AG04449 (cell line): ENCODE measurements at regions of chr14 and their contacts with region 1.

Region 1: DNA sequence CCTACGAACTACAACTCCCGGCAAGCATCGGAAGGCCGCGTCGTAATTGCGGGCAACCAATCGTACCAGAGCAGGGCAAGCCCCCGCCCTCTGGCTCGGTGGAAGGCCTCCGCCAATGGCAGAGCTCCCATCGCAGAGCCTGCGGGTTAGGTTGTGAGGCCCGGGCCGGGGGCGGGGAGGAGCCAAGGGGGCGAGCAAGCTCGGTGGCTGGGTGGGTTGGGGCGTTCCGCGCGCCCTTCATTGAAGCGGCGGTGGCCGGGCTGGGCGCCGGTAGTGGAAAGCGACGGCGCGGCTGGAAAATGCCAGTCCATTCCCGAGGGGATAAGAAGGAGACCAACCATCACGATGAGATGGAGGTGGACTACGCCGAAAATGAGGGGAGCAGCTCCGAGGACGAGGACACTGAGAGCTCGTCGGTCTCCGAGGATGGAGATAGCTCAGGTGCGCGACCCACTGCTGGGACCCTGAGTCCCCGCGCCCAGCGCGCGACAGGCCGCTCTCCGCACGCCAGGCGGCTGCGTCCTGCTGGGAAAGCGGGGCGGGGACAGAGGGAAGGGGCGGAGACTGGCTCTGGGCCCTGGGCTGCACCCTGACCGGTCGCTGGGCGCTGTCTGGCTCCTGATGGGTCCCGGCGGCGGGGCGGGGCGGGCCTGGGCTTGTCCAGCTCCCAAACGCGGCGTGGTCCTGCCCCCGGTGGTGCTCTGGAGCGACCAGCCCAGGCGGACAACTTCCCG is at the start of gene BRMS1L:
- DNase-seq: peak; percentile 85
- H3K4me3 ChIP-seq: peak within 1 kb of the TSS; percentile 100
- CTCF ChIP-seq: no peak

Region 2: DNA sequence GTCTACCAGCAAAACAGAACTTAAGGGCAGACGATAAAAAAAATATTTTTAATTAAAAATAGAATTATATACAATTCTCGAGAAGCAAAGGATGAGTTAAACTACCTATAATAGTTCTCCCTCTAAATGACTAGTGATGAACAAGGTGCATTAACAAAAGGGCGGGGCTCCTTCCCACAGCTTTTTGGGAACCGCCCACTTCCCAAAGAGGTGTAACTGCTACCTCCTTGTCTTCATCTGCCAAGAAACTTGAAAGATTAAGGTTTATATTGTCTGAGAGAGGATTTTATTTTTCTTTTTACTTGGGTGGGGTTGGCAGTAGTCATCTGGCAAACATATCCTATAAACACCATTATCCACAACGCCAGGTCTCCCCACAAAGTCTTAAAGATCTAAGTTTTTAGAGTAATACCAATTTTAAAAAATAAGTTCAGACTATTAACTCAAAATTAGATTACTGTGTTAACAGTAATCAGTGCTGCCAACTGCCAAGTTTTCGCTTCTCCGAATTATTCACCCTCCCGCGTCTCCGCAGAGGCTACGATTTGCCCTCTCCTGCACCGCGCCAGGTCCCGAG is 18.2 kb before region 1 on chr14:
- CTCF ChIA-PET with region 1: interaction called, 80 read pairs
- POLR2A ChIA-PET with region 1: interaction called, 6 read pairs
- DNase-seq: no peak
- H3K4me3 ChIP-seq: peak overlapping the region; percentile 82
- CTCF ChIP-seq: no peak

Region 3: DNA sequence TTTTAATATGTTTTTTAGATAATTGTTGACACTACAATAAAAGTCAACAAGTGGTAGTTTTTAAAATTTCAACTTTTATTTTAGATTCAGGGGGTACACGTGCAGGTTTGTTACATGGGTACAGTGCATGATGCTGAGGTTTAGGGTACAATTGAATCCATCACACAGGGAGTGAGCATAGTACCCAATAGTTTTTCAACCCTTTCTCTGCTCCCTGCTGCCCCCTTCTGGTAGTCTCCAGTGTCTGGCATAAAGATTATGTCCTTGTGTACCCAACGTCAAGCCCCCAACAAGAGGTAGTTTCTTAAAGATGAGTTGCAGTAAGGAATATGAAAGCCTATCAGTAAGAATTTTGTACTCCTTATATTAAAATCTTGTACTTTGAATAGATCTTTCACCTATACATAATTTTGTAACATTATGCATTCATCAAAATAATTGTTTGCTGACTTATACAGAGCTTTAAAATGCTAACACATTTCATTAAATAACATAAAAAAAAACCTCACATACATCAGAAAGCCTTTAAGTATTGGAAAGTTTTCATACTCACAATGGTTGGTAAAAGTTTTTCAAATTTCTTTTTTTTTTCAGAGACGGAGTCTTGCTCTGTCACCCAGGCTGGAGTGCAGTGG is 11.9 kb before region 1 on chr14:
- CTCF ChIA-PET with region 1: interaction called, 45 read pairs
- POLR2A ChIA-PET with region 1: interaction called, 6 read pairs
- DNase-seq: no peak
- H3K4me3 ChIP-seq: no peak overlapping the region
- CTCF ChIP-seq: peak; percentile 72